ENCODE measurements at regions of chr9 and their contacts with region 1.

Region 1: DNA sequence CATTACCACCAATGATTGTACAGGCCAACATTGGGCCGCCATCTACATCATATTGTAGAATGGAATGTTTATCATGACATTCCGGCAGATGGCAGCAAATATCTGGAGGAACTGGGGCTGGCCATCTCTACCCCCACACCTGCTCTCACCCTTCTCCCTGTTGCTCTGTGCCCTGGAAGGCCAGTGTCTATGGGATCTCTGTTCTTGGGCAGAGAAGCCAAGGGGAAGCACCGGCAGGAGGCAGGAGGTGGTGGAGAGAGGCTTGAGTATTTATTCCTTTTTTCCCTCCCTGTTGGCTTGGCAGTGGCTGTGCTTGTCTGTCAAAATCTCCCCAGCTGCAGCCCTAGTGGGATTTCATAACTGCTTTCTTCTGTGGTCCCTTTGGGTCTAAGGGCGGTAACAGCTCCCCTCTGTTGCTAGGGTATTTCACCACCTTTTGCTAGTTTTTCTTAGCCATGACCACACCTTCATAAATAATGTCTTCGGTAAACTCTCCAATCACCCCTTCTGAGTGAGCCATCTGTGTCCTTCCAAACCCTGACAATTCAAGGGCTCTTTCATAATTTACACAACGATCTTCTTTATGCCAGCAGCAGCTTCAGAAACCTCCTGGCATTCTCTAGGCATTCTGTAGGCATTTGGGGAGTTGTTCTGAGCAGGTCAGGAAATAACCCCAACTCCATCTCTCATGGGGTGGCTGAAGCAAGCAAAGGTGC is 225.8 kb downstream of the MELK start:
- DNase-seq: peak; percentile 13 to 33 (median 18)
- ATAC-seq: peak; percentile 73
- H3K4me3 ChIP-seq: no peak overlapping the region
- H3K27ac ChIP-seq: no peak overlapping the region
- H3K4me1 ChIP-seq: no peaks in the 10 kb centered on the region
- H3K27me3 ChIP-seq: peaks cover 5 to 23% of the 10 kb centered on the region in 2 experiments; a peak in 2 of 5 replicates
- CTCF ChIP-seq: peak; percentile 36 to 55 (median 37); a peak in 4 of 6 replicates
- EP300 ChIP-seq: no peak
- POLR2A ChIP-seq: no peak
- RAD21 ChIP-seq: peak in 1 of 2 experiments; percentile 62; a peak in 2 of 4 replicates

Region 2: DNA sequence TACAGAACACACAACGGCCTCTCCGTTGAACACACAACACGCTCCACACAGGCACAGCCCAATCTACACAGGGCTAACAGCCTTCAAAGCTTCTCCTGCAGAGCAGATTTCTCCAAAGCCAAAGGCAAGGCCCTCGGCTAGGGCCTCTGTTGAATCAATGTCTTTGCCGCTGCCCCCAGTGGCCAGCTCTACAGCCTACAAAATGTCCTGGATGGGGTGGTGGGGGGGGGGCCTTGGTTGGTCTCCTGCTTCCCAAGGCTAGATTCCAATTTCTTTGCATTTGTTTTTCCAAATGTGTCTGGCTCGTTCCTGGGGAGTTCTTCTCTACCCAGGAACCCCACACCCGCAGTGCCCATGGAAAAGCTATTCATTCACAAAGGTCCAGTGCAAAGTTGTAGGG is 68.3 kb after region 1 on chr9:
- CTCF ChIA-PET with region 1: no interaction called
- POLR2A ChIA-PET with region 1: no interaction called
- in situ Hi-C with region 1: no loop called
- intact Hi-C with region 1: loop called (anchors 5 kb)
- DNase-seq: peak in 2 of 4 experiments; percentile 11 to 17
- ATAC-seq: peak; percentile 57
- H3K4me3 ChIP-seq: no peak overlapping the region
- H3K27ac ChIP-seq: no peak overlapping the region
- H3K4me1 ChIP-seq: no peaks in the 10 kb centered on the region; a peak in 1 of 5 replicates
- H3K27me3 ChIP-seq: peaks cover 6 to 51% of the 10 kb centered on the region in 2 experiments; a peak in 3 of 5 replicates
- CTCF ChIP-seq: no peak; a peak in 1 of 6 replicates
- EP300 ChIP-seq: no peak
- POLR2A ChIP-seq: no peak
- RAD21 ChIP-seq: no peak

Measured in K562 (cell line).